WTC11 (cell line): ENCODE measurements at regions of chr12 and their contacts with region 1.

Region 1: GRCh38 chr12:54398995-54399793 is 14.7 kb upstream of the ZNF385A start:
- DNase-seq: peak; percentile 94
- ATAC-seq: peak; percentile 94
- H3K4me3 Mint-ChIP-seq: no peak overlapping the region
- H3K27ac Mint-ChIP-seq: no peak overlapping the region
- H3K4me1 Mint-ChIP-seq: peaks cover under 1% of the 10 kb centered on the region
- H3K27me3 Mint-ChIP-seq: peaks cover under 1% of the 10 kb centered on the region
- CTCF ChIP-seq: peak; percentile 99

Region 2: DNA sequence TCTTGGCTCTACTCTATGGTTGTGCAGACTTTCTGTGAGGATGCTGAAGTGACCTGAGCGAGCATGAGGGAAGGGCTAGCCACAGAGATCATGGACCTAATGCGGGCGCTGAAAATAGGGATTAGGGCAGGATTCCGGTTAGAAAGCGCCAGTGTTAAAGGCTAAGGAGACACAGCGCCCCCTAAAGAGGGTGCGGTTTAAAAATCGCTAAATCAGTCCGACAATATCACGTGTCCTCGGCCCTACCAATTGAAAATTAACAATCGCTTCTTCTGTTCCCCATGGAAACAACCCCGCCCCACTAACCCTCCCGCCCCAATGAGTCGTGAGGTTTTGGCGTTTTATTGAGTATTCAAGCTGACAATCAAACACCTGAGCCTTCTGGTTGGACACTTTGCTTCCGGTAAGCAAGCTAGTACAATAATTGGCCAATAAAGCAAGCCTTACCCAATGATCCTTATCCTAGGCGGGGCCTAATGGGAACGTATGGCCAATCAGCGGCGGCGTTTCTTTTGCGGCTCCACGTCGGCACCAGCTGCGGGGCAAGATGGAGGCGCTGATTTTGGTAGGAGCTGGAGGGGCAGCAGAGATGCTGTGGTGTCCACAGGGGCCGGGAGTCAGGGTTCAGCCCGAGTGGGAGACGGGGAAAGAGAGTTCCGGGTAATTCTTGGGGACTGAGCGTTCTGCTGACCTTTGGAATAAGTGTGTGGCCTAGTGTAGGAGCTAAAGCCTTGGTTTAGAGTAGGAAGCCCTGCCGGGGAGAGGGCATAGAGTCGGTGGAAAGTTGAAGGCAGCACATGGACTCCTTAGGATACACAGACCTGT is 74.4 kb before region 1 on chr12 and contains the start of gene COPZ1:
- CTCF ChIA-PET with region 1: interaction called, 11 read pairs
- POLR2A ChIA-PET with region 1: no interaction called
- DNase-seq: peak; percentile 94
- ATAC-seq: peak; percentile 97
- H3K4me3 Mint-ChIP-seq: peak within 1 kb of the TSS; percentile 100
- H3K27ac Mint-ChIP-seq: peak within 1 kb of the TSS; percentile 98
- H3K4me1 Mint-ChIP-seq: peaks cover 24% of the 10 kb centered on the region
- H3K27me3 Mint-ChIP-seq: peaks cover 3% of the 10 kb centered on the region; the same call in 1 of the 2 replicates
- CTCF ChIP-seq: peak; percentile 84
- total RNA-seq, gene COPZ1: 98.2 to 116 TPM (median 115 TPM) in 3 replicates

Region 3: DNA sequence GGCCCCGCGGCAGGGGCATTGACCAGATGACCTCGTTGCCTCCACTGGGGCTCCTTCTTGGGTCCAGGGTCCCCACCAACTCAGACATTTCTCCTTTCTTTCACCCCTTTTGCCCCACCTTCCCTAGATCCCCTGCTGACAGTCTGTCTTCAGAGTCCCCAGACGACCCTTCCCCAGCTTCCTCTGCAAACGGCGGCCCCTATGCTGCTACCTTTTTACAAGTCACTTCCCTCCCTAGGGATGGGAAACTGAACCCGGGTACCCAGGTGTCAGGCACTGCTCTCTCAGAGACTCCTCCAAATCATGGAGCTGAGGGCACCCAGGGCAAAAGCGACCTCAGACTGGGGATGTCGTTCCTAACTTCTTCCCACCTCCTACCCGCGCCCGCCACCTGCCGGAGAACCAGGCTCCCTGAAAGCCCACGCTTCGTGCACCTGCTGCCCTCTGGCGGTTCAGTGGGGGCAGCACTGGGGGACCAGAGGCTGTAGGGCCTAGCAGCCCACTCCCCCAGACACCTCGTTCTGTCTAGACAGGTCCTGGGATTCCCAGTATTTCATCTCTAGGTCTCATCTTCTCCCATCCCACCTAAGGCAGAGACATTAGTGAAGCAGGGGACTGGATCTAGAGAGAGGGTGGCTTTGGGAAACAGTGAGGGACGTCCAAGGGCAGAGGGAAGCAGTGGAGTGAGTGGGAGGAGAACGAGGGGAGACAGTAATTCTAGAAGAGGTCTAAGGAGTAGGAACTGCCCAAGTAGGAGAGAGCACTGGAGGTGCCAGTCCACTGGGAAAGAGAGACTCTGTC is 19.6 kb before region 1 on chr12:
- CTCF ChIA-PET with region 1: interaction called, 67 read pairs
- POLR2A ChIA-PET with region 1: interaction called, 5 read pairs
- DNase-seq: peak; percentile 98
- ATAC-seq: peak; percentile 82
- H3K4me3 Mint-ChIP-seq: peak overlapping the region; percentile 72
- H3K27ac Mint-ChIP-seq: peak overlapping the region; percentile 88; the same call in 1 of the 2 replicates
- H3K4me1 Mint-ChIP-seq: peaks cover 24% of the 10 kb centered on the region
- H3K27me3 Mint-ChIP-seq: peaks cover 10% of the 10 kb centered on the region
- CTCF ChIP-seq: peak; percentile 98

Region 4: DNA sequence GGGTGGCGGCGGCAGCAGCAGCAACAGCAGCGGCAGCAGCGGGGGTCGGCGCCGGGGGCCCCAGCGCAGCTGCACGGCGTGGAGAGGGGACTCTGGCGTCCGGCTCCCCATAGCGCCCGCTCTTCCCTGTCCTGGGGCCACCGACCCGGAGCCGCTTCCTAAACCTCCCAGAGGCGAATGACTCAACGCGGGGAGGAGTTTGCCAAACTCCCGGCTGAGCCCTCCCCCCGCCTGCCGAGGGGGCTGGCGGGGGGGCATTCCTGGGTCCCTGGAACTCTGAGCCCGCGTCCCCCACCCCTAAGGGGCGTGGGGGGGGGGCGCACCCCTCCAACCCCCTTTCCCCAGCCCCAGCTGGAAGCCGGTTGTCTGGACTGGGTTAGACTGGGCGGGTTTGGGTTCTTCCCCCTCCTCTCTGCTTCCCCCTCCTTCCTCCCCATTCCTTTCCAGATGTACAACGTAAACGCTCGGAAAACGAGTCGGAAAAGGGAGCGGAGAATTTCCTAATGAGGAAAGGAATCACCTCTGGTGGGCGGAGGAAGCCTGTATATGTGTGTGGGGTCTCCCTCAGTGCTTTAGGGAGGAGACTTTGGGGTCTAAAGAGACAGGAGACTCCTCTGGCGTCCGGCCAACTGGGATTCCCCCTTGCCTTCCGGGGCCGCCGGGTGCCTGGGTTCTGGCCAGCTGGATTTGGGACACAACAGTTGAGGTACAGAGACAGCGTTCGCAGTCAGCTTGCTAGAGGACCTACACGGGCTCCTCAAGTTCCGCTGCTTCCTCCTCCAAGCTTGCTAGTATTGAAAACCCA is 20.1 kb after region 1 on chr12 and contains the start of gene ITGA5:
- CTCF ChIA-PET with region 1: interaction called, 230 read pairs
- POLR2A ChIA-PET with region 1: interaction called, 4 read pairs
- DNase-seq: peak; percentile 62
- ATAC-seq: peak; percentile 40
- H3K4me3 Mint-ChIP-seq: peak within 1 kb of the TSS; percentile 84
- H3K27ac Mint-ChIP-seq: no peak within 1 kb of the TSS
- H3K4me1 Mint-ChIP-seq: peaks cover 34% of the 10 kb centered on the region
- H3K27me3 Mint-ChIP-seq: peaks cover 63% of the 10 kb centered on the region
- CTCF ChIP-seq: no peak
- total RNA-seq, gene ITGA5: 19.3 to 21.9 TPM (median 20.8 TPM) in 3 replicates

Region 5: DNA sequence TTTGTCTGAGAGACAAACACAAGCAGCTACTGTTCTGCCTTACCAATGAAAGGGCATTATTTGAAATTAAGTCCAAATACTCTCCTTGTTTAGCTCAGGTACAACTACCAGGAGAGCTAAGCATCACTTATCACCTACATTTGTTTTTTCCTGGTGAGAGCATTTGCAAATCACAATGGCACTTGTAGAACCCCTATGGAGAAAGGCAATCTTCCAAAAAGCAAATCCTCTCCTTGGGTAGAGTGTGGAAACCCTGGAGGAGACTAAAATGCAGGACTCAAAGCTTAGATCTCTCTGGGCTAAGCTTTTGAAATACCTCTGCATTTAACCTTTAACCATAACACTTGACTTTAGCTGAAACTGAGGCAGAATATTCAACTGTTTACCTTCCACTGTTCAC is 53.4 kb after region 1 on chr12:
- CTCF ChIA-PET with region 1: interaction called, 361 read pairs
- POLR2A ChIA-PET with region 1: no interaction called
- DNase-seq: no peak
- ATAC-seq: peak; percentile 87
- H3K4me3 Mint-ChIP-seq: no peak overlapping the region
- H3K27ac Mint-ChIP-seq: no peak overlapping the region
- H3K4me1 Mint-ChIP-seq: peaks cover 18% of the 10 kb centered on the region
- H3K27me3 Mint-ChIP-seq: peaks cover 100% of the 10 kb centered on the region
- CTCF ChIP-seq: no peak

Region 6: GRCh38 chr12:54497883-54498282 is 98.7 kb after region 1 on chr12:
- CTCF ChIA-PET with region 1: interaction called, 12 read pairs
- POLR2A ChIA-PET with region 1: no interaction called
- DNase-seq: no peak
- ATAC-seq: no peak
- H3K4me3 Mint-ChIP-seq: no peak overlapping the region
- H3K27ac Mint-ChIP-seq: no peak overlapping the region
- H3K4me1 Mint-ChIP-seq: no peaks in the 10 kb centered on the region
- H3K27me3 Mint-ChIP-seq: peaks cover 25% of the 10 kb centered on the region
- CTCF ChIP-seq: no peak

Region 7: GRCh38 chr12:54571193-54572188 is 172.3 kb after region 1 on chr12:
- CTCF ChIA-PET with region 1: interaction called, 19 read pairs
- POLR2A ChIA-PET with region 1: no interaction called
- DNase-seq: peak; percentile 54
- ATAC-seq: peak; percentile 54
- H3K4me3 Mint-ChIP-seq: no peak overlapping the region
- H3K27ac Mint-ChIP-seq: no peak overlapping the region
- H3K4me1 Mint-ChIP-seq: peaks cover 28% of the 10 kb centered on the region
- H3K27me3 Mint-ChIP-seq: peaks cover 67% of the 10 kb centered on the region
- CTCF ChIP-seq: no peak

Region 8: DNA sequence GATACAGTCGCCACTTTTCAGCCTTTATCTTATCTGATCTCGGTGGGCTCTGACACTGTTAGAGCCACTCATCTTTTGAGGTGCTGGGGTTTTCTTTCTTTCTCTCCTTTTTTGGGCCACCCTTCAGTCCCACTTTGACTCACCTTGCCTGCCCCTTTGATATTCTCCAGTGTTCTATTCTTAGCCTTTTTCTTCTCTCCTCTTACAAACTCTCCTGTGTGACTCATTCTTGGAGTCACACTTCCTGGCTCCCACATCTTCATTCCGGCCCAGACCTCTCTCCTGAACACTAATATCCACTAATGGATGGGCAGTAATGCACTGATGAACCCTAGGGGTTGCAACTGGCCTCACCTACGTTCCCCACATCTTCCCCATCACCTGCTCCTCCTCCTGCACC is 251.2 kb after region 1 on chr12:
- CTCF ChIA-PET with region 1: no interaction called
- POLR2A ChIA-PET with region 1: no interaction called
- DNase-seq: no peak
- ATAC-seq: no peak
- H3K4me3 Mint-ChIP-seq: no peak overlapping the region
- H3K27ac Mint-ChIP-seq: no peak overlapping the region
- H3K4me1 Mint-ChIP-seq: peaks cover 11% of the 10 kb centered on the region; the same call in 1 of the 2 replicates
- H3K27me3 Mint-ChIP-seq: peaks cover 18% of the 10 kb centered on the region
- CTCF ChIP-seq: no peak